Activated T-helper 1 cell treated with anti-CD3 and anti-CD28 coated beads, Interleukin-12 subunit alpha, Interleukin-12 subunit beta, Interleukin-2, Interleukin-4 antibody, amounts not matched to agents 30 ng/mL and 10 ng/mL and 1 ng/mL, durations not matched to agents 14 hours and 24 hours and 36 hours (primary cell): ENCODE measurements at regions of chr2 and their contacts with region 1.

Region 1: DNA sequence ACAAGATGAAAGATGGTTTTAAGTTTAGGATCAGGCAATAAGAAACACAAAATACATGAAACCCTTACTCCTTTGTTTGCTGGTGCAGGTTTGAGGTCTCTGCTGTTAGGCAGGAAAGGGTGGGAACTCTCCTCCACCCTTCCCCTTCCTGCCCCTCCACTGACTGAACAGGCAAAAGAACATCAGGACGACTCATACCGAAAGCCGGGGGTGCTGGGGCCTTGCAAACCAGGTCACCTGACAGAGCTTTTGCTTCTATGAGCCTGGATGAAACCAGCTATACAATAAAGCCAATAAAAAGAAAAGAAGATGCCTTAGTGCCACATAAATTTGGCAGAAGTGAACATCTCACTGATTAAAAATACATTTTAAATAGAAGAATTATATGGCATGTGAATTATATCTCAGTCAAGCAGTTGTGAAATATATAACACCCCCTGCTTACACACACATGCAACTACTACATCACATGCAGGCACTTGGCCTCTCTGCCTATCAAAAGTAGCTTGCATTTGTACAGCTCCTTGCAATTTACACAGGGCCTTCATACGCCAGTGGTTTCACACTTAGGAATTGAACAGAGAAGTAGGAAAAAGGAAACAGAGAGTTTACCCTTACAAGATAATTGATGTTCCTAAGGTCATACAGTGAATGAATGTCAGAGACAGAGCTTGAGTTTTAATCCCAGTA is 215.1 kb upstream of the TRIB2 start:
- DNase-seq: peak; percentile 79
- H3K4me3 Mint-ChIP-seq: peak overlapping the region; percentile 34
- H3K27ac Mint-ChIP-seq: peak overlapping the region; percentile 89
- H3K4me1 Mint-ChIP-seq: peaks cover 92% of the 10 kb centered on the region
- H3K27me3 Mint-ChIP-seq: no peaks in the 10 kb centered on the region

Region 2: GRCh38 chr2:12005886-12006681 is 495.5 kb before region 1 on chr2:
- intact Hi-C with region 1: loop called (anchors 5 kb)
- DNase-seq: peak; percentile 45
- H3K4me3 Mint-ChIP-seq: no peak overlapping the region
- H3K27ac Mint-ChIP-seq: no peak overlapping the region
- H3K4me1 Mint-ChIP-seq: peaks cover 7% of the 10 kb centered on the region
- H3K27me3 Mint-ChIP-seq: peaks cover 58% of the 10 kb centered on the region

Region 3: DNA sequence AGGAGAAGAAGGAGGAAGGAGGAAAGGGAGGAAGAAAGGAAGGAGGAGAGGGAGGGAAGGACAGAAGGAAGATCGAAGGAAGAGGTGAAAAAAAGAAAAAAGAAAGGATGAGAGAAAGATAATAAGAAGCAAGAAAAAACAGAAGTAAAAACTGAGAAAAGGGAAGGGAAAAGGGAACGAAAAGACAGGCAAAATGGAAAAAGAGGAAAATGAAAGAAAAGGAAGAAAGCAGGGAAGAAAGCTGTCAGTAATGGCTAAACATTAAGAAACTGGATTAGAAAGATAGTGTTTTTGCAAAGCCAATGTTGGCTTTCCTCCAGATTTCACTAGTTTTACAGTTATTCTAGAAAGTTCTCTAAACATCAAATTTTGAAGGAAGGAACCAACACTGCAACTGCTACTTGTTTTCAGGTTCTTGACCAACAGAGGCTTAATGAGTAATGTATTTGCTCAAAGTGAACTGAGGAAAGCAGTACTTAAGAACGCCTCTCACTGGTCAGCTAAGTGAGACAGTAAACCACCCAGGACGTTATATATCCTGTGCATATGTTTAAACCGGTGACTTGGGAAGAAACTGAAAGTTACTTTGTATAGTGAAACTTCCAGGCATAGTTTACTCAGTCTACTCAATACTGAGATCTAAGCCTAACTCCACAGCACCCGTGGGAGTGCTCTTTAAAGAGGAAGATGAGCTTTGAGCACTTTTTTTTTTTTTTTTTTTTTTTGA is 71.0 kb before region 1 on chr2:
- intact Hi-C with region 1: loop called (anchors 1 kb)
- DNase-seq: peak; percentile 8
- H3K4me3 Mint-ChIP-seq: peak overlapping the region; percentile 58
- H3K27ac Mint-ChIP-seq: peak overlapping the region; percentile 74
- H3K4me1 Mint-ChIP-seq: peaks cover 55% of the 10 kb centered on the region
- H3K27me3 Mint-ChIP-seq: no peaks in the 10 kb centered on the region

Region 4: DNA sequence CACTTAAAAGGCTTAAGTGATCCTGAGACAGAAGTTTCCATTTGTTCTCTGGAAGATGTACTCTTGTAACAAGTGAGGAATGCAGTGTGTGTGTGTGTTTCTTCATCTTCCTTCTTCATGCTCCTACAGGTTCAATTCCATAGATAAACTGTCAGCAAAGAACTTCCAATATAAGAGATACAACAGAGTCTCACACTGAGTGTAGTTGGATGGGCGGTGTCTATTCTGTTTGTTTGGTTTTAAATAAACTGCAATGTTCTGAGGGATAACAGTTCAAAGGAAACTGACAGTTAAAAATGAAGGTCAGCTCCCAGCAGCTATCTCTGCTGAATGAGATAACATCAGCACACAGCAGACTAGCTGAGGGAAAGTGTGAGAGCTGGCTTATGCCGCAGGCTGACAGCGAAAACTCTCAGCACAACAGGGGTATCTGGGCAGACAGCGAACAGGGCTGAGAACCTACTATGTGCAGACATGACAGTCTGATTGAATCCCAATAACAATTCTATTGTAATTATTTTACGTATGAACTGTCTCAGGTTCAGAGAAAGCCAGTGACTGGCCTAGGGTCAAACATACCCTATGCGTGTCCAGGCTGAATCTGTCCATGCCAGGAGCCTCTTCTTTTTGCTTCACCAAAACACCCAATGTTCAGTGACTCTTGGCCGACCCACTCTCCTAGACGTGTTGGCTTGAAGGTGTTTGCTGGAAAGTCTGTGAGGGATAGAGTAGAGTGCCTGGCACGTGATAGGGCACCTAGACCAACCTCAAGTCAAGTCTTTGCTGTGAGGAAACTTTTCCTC is 13.2 kb after region 1 on chr2:
- intact Hi-C with region 1: loop called (anchors 1 kb)
- DNase-seq: no peak
- H3K4me3 Mint-ChIP-seq: peak overlapping the region; percentile 54
- H3K27ac Mint-ChIP-seq: no peak overlapping the region
- H3K4me1 Mint-ChIP-seq: peaks cover 35% of the 10 kb centered on the region
- H3K27me3 Mint-ChIP-seq: peaks cover 10% of the 10 kb centered on the region

Region 5: GRCh38 chr2:12675352-12675795 is 173.8 kb after region 1 on chr2:
- intact Hi-C with region 1: no loop called
- DNase-seq: no peak
- H3K4me3 Mint-ChIP-seq: no peak overlapping the region
- H3K27ac Mint-ChIP-seq: no peak overlapping the region
- H3K4me1 Mint-ChIP-seq: no peaks in the 10 kb centered on the region
- H3K27me3 Mint-ChIP-seq: no peaks in the 10 kb centered on the region

Region 6: DNA sequence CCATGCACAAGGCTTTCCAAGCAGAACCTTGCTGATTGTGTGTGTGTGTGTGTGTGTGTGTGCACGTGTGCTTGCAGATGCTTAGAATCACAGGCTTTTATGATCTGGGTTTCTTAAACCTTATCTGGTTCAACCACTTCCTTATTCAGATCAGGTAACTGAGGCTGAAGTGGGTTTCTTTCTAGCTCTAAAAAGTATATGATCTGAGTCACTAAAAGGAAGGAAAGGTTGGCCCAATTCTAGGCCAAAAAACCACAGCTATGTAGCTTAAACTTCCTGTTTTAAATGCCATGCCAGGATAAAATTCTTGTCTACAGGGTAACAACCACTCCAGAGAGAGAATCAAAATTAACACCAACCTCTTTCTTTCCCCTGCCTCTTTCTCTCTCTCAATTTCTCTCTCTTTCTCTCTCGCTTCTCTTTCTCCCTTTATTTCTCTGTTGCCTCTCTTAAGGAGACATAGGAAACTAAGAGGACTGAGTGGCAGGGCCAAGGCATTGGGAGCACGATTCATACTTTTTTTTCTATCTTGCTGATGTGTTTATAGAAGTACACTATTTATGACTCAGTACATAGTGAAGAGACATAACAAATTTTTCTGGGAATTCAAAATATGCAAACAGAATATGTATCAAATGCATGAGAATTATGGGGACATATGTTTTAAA is 355.5 kb after region 1 on chr2:
- intact Hi-C with region 1: loop called (anchors 2 kb)
- DNase-seq: peak; percentile 26
- H3K4me3 Mint-ChIP-seq: no peak overlapping the region
- H3K27ac Mint-ChIP-seq: no peak overlapping the region
- H3K4me1 Mint-ChIP-seq: peaks cover 18% of the 10 kb centered on the region
- H3K27me3 Mint-ChIP-seq: no peaks in the 10 kb centered on the region